Panc1 (cell line): ENCODE measurements at regions of chr21 and their contacts with region 1.

Region 1: DNA sequence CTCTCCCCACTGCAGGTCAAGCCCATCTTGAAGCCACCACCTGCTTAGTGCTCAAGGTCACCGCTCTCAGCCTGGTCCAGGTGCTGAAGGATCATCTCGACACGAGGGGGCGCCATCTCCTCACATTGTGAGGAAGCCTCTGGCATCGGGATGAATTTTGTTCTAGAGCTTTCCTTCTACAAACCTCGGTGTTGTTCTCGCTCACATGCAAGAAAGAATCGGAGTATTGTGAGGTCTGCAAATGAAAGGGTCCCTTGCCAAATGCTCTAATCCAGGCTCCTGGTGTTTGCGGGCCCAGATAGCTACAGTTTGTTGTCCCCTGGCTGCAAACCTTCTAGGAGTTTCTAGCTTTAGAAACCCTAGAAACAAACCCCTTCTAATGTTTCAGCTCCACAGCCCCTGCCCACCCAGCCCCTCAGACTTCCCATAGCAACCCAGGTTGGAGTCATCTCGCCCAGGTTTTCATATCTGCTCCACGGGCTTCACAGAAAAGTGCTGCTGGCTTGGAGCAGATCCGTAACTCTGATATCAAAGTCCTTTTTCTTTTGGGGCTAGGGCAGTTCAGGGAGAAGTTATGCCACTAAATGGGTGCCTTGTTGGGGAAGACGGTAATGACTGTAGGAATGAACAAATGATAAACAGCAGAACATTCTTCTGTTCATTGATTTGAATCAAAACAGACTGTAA is 8.6 kb upstream of the ATP5PO start:
- DNase-seq: peak; percentile 51
- ATAC-seq: peak; percentile 96
- H3K4me3 ChIP-seq: peak overlapping the region in 1 of 2 experiments; percentile 23; a peak in 1 of 4 replicates
- H3K27ac ChIP-seq: peak overlapping the region; percentile 76
- H3K4me1 ChIP-seq: peaks cover 22% of the 10 kb centered on the region
- H3K27me3 ChIP-seq: no peaks in the 10 kb centered on the region
- CTCF ChIP-seq: peak; percentile 84

Region 2: GRCh38 chr21:33539612-33540011 is 384.6 kb before region 1 on chr21:
- CTCF ChIA-PET with region 1: no interaction called
- POLR2A ChIA-PET with region 1: no interaction called
- in situ Hi-C with region 1: no loop called
- intact Hi-C with region 1: no loop called
- DNase-seq: no peak
- ATAC-seq: no peak
- H3K4me3 ChIP-seq: no peak overlapping the region
- H3K27ac ChIP-seq: peak overlapping the region; percentile 98
- H3K4me1 ChIP-seq: peaks cover 10% of the 10 kb centered on the region
- H3K27me3 ChIP-seq: no peaks in the 10 kb centered on the region
- CTCF ChIP-seq: no peak

Region 3: DNA sequence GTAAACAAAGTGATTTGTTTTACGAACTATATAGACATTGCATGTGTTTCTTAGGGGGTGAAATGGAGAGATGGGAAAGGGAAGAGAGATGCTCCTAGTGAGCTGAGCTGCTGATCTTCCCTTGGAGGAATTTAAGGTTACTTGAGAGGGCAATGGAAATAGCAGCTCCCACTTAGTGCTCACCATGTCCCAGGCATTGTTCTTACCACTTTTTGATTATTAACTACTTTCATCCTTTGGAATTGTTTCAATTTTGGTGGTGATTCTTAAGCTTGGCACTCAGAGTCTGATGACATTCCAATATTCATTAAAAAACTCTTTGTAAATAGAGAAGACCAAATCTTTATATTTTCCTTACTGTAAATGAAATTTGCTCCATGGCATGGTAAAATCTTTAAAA is 157.0 kb before region 1 on chr21:
- CTCF ChIA-PET with region 1: no interaction called
- POLR2A ChIA-PET with region 1: no interaction called
- in situ Hi-C with region 1: no loop called
- intact Hi-C with region 1: no loop called
- DNase-seq: no peak
- ATAC-seq: no peak
- H3K4me3 ChIP-seq: no peak overlapping the region
- H3K27ac ChIP-seq: no peak overlapping the region
- H3K4me1 ChIP-seq: no peaks in the 10 kb centered on the region
- H3K27me3 ChIP-seq: no peaks in the 10 kb centered on the region
- CTCF ChIP-seq: no peak

Region 4: DNA sequence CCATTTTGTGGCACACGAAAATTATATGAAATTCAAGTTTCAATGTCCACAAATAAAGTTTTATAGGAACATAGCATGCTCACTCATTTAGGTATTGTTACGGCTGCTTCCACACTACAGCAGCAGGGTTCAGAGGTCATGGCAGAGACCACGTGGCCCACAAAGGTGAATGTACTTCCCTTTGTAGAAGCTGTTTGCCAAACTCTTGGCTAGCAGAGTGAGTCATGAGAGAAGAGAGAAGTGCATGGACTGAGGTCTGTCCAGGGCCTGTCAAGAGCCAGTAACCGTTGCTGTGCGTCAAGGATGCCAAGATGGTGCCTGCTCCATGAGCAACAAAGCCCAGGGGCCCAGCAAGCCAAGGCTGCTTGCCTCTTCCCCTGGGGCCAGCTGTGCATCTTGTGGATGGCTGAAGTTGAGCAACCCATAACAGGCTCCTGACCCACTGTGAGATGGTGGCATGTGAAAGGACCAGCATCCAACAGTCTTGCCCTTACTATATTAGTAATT is 56.1 kb after region 1 on chr21:
- CTCF ChIA-PET with region 1: no interaction called
- POLR2A ChIA-PET with region 1: no interaction called
- in situ Hi-C with region 1: no loop called
- intact Hi-C with region 1: loop called (anchors 10 kb)
- DNase-seq: no peak
- ATAC-seq: no peak
- H3K4me3 ChIP-seq: no peak overlapping the region
- H3K27ac ChIP-seq: no peak overlapping the region
- H3K4me1 ChIP-seq: peaks cover 14% of the 10 kb centered on the region
- H3K27me3 ChIP-seq: no peaks in the 10 kb centered on the region
- CTCF ChIP-seq: no peak

Region 5: DNA sequence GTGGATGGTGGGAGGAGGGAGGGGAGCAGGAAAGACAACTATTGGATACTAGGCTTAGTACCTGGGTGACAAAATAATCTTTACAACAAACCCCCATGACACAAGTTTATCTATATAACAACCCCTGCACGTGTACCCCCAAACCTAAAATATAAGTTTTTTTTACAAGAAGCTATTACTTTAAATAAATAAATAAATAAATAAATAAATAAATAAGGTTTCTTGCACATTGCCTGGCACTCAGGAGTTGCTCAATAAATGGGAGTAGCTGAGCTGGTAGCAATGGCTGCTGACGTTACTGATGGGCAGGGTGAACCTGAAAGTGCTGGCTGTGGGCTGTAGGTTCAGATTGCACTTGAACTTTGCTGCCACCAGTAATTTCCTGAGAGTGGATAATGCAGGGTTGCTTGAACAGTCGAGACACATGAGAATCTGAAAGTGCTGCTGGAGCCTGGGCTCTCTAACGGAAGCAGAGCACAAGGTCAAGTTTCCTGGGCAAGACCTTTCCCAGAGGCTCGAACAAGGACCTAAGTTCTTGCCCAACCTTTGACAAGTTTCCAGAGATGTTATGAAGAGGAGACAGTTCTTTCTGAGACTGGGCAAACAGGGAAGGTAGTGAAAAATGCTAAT is 424.8 kb after region 1 on chr21:
- CTCF ChIA-PET with region 1: interaction called, 5 read pairs
- POLR2A ChIA-PET with region 1: no interaction called
- in situ Hi-C with region 1: no loop called
- intact Hi-C with region 1: loop called (anchors 1 kb)
- DNase-seq: no peak
- ATAC-seq: no peak
- H3K4me3 ChIP-seq: no peak overlapping the region
- H3K27ac ChIP-seq: no peak overlapping the region
- H3K4me1 ChIP-seq: no peaks in the 10 kb centered on the region
- H3K27me3 ChIP-seq: no peaks in the 10 kb centered on the region
- CTCF ChIP-seq: no peak